Gastrocnemius medialis (tissue), 4 donors: ENCODE measurements at regions of chr1 and their contacts with region 1.

Region 1: DNA sequence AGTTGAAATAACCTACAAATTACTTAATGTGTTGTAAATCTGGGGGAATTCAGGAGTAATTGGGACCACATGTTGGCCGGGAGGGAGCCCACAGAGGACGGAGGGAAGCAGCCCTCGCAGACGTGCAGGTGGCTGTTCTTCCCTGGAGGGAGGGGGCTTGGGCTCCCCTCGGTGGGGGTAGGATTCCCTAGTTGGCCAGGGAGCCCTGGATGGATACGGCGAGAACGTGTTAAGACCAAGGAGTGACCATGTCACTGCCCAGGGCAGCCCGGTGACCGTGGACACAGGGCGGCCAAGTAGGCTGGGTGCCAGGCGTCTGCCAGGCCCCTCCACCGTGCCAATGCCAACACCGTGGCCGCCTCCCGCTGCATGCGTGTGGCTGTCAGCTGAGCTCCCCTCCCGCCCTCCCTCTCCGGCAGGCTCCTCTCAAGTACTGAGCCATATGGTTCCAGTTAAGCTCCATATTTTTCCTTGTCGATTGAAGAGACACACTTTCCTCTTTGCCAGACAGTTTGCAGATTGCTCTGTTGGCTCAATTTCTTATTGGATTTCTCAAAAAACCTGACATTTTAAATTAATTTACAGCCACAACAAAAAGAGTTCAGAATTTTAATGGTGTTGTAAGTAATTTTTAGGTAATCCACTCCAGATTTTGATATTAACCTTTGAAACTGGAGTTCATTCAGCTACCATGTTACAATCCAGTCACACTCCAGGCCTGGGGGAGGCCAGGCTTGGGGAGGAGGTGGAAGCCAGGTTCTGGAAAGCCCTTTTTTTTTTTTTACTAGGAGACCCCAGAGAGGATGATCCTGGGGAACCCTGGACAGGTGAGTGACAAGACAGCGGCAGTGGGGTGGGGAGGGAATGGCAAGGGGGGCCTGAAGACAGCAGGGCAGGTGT is 71.2 kb downstream of the CASZ1 start:
- DNase-seq: peak; percentile 88 to 96
- ATAC-seq: peak; percentile 40 to 43
- H3K4me3 ChIP-seq: peak overlapping the region in 1 of 4 donors; percentile 3
- H3K27ac ChIP-seq: peak overlapping the region; percentile 93 to 100 (median 98)
- H3K4me1 ChIP-seq: peaks cover 59 to 81% of the 10 kb centered on the region in 2 donors
- H3K27me3 ChIP-seq: no peaks in the 10 kb centered on the region
- CTCF ChIP-seq: no peak
- POLR2A ChIP-seq: peak; percentile 24 to 25

Region 2: GRCh38 chr1:10710494-10710893 is 14.7 kb before region 1 on chr1:
- in situ Hi-C with region 1: no loop called
- intact Hi-C with region 1: loop called (anchors 1 kb)
- DNase-seq: peak; percentile 88
- ATAC-seq: peak; percentile 83 to 85
- H3K4me3 ChIP-seq: no peak overlapping the region
- H3K27ac ChIP-seq: peak overlapping the region; percentile 70 to 77 (median 74)
- H3K4me1 ChIP-seq: peaks cover 32 to 37% of the 10 kb centered on the region in 2 donors
- H3K27me3 ChIP-seq: no peaks in the 10 kb centered on the region
- CTCF ChIP-seq: no peak
- POLR2A ChIP-seq: peak in 1 of 2 donors; percentile 36

Region 3: GRCh38 chr1:10745886-10746455 is 20.8 kb after region 1 on chr1:
- in situ Hi-C with region 1: no loop called
- intact Hi-C with region 1: loop called (anchors 1 kb)
- DNase-seq: peak; percentile 93 to 98
- ATAC-seq: peak; percentile 90 to 92
- H3K4me3 ChIP-seq: peak overlapping the region; percentile 22 to 42 (median 34)
- H3K27ac ChIP-seq: peak overlapping the region; percentile 95 to 97 (median 96)
- H3K4me1 ChIP-seq: peaks cover 40 to 55% of the 10 kb centered on the region in 2 donors
- H3K27me3 ChIP-seq: no peaks in the 10 kb centered on the region
- CTCF ChIP-seq: peak in 1 of 5 experiments; percentile 15
- POLR2A ChIP-seq: peak; percentile 66 to 70

Region 4: GRCh38 chr1:10779841-10780622 is 54.8 kb after region 1 on chr1:
- in situ Hi-C with region 1: no loop called
- intact Hi-C with region 1: loop called (anchors 2 kb)
- DNase-seq: no peak
- ATAC-seq: no peak
- H3K4me3 ChIP-seq: no peak overlapping the region
- H3K27ac ChIP-seq: peak overlapping the region in 2 of 4 donors; percentile 28 to 73
- H3K4me1 ChIP-seq: peaks cover 66 to 71% of the 10 kb centered on the region in 2 donors
- H3K27me3 ChIP-seq: no peaks in the 10 kb centered on the region
- CTCF ChIP-seq: no peak
- POLR2A ChIP-seq: no peak

Region 5: GRCh38 chr1:10788592-10789006 is 63.4 kb after region 1 on chr1:
- in situ Hi-C with region 1: no loop called
- intact Hi-C with region 1: loop called (anchors 1 kb)
- DNase-seq: peak; percentile 70 to 93
- ATAC-seq: peak; percentile 71 to 73
- H3K4me3 ChIP-seq: peak overlapping the region in 2 of 4 donors; percentile 7 to 8
- H3K27ac ChIP-seq: peak overlapping the region; percentile 98 to 100 (median 99)
- H3K4me1 ChIP-seq: peaks cover 76 to 79% of the 10 kb centered on the region in 2 donors
- H3K27me3 ChIP-seq: no peaks in the 10 kb centered on the region
- CTCF ChIP-seq: peak; percentile 62 to 72 (median 70)
- POLR2A ChIP-seq: peak in 1 of 2 donors; percentile 21